Left ventricle myocardium inferior (tissue), 1 donor: ENCODE measurements at regions of chr2 and their contacts with region 1.

Region 1: GRCh38 chr2:102753563-102754159 is 8.2 kb upstream of the TMEM182 start:
- DNase-seq: no peak
- H3K4me3 ChIP-seq: no peak overlapping the region
- H3K27ac ChIP-seq: no peak overlapping the region
- H3K4me1 ChIP-seq: peaks cover 15% of the 10 kb centered on the region
- H3K27me3 ChIP-seq: no peaks in the 10 kb centered on the region
- CTCF ChIP-seq: peak; percentile 84

Region 2: DNA sequence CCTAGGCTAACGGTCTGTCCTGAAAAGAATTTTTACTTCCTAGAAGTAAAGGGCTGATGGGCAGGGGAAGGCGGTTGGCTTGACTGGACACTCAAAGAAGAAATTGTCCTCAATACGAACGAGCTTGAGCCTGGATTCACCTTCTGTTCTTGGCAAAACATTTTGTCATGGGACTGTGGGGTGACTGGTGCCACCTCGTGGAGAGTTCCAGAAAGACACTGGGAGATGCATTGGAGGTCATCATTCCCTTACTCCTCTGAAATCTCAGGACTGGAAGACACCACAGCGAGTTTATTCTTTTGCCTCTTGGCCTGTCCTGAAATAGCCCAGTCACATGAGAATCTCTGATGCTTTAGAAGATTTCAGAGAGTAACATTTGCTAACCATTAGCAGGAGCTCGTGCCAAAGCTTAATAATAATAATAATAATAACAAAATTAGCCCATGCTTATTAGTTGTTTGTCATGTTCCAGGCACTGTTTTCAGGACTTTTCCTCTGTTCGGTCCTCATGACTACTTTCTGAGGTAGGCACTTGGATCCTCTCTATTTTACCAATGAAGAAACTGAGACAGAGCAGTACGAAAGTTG is 52.7 kb after region 1 on chr2:
- intact Hi-C with region 1: loop called (anchors 5 kb)
- DNase-seq: peak; percentile 66
- H3K4me3 ChIP-seq: no peak overlapping the region
- H3K27ac ChIP-seq: peak overlapping the region; percentile 93
- H3K4me1 ChIP-seq: peaks cover 79% of the 10 kb centered on the region
- H3K27me3 ChIP-seq: no peaks in the 10 kb centered on the region
- CTCF ChIP-seq: peak; percentile 84

Region 3: GRCh38 chr2:102880731-102881130 is 127.1 kb after region 1 on chr2:
- intact Hi-C with region 1: no loop called
- DNase-seq: no peak
- H3K4me3 ChIP-seq: no peak overlapping the region
- H3K27ac ChIP-seq: no peak overlapping the region
- H3K4me1 ChIP-seq: peaks cover 10% of the 10 kb centered on the region
- H3K27me3 ChIP-seq: no peaks in the 10 kb centered on the region
- CTCF ChIP-seq: no peak